ENCODE measurements at regions of chr6 and their contacts with region 1.

Region 1: DNA sequence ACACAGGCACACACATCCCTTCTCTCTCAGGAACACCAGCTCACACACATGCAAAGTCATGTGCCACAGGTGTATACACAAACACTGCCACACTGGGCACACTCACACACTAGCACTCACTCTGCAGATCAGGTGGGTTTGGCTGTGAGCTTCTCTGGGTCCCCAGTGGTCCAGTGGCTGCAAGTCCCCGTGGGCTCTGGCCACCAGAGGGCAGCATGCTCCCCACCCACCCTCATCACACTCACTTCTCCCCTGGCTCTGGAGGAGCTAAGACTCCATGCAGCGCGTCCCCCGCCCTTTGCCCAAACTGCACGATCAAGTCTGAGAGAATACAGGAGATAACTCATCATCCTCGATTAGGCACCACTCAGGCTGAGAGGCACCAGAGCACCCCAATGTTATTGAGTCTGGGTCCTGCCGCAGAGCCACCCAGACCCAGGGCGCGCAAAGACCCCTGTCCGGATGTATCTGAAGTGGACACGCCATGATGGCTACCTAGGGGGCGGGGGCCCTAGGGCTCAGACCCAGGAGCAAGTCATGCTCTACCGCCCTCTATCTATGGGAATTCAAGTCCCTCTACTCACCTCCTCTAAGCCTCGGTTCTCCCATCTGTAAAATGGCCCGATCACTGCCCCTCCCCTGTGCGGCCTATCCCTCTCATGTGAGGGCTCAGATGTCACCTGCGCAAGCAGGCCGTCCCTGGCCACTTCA is 90.5 kb downstream of the GRM4 start:
- DNase-seq: peak; percentile 37 to 65 (median 51)
- ATAC-seq: peak; percentile 79
- H3K4me3 ChIP-seq: no peak overlapping the region
- H3K4me3 Mint-ChIP-seq: no peak overlapping the region
- H3K27ac ChIP-seq: no peak overlapping the region
- H3K27ac Mint-ChIP-seq: peak overlapping the region in 1 of 9 donors; percentile 25
- H3K4me1 ChIP-seq: no peaks in the 10 kb centered on the region
- H3K4me1 Mint-ChIP-seq: peaks cover 0 to 11% (median 0%) of the 10 kb centered on the region in 7 donors
- H3K27me3 ChIP-seq: no peaks in the 10 kb centered on the region
- H3K27me3 Mint-ChIP-seq: peaks cover 0 to 15% (median 0%) of the 10 kb centered on the region in 5 donors

Region 2: DNA sequence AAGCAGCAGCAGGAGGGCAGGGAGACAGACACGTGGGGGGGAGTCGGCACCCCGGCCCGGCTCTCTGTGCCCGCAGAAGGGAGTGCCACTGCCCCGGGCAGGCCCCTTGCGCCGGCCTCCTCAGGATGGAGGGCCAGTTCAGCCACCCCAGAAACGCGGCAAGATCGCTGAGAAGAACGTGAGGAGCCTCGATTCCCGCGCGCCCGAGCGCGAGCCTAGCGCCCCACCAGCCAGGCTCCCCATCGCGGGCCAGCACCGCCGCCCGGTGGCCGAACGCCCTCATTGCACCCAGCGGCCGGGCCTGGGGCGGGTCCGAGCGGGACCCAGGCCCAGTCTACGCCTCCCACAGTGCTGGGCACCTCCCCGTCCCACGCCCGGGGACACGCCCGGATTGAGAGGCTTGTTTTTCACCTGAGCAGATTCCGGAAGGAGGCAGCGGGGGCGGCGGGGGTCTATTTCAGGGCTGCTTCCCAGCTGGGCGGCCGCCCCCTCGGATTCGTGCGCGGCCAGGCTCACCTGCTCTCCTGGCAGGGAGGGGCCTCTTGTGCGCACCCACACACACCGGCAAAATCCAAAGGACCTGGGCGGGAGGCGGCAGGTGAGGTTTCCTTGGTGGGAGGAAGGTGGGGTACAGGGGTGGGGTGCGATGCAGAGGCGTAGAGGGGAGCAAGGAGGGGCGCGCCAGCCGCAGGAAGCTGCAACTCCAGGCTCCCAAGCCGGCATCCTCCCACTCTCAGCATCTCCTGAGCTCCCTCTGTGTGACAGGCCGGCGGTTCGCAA is 99.5 kb after region 1 on chr6:
- CTCF ChIA-PET with region 1: interaction called, 27 read pairs
- POLR2A ChIA-PET with region 1: no interaction called
- intact Hi-C with region 1: loop called in 1 of 2 experiments (anchors 1 kb)
- DNase-seq: peak; percentile 28 to 80 (median 70)
- ATAC-seq: peak; percentile 91
- H3K4me3 ChIP-seq: peak overlapping the region; percentile 37
- H3K4me3 Mint-ChIP-seq: peak overlapping the region in 8 of 10 donors; percentile 29 to 74 (median 54)
- H3K27ac ChIP-seq: no peak overlapping the region
- H3K27ac Mint-ChIP-seq: no peak overlapping the region
- H3K4me1 ChIP-seq: peaks cover 3 to 9% of the 10 kb centered on the region in 2 donors
- H3K4me1 Mint-ChIP-seq: peaks cover 0 to 10% (median 5%) of the 10 kb centered on the region in 7 donors
- H3K27me3 ChIP-seq: peaks cover 2 to 6% of the 10 kb centered on the region in 2 donors
- H3K27me3 Mint-ChIP-seq: peaks cover 25 to 82% (median 34%) of the 10 kb centered on the region in 5 donors

Region 3: GRCh38 chr6:34771727-34772126 is 716.3 kb after region 1 on chr6:
- CTCF ChIA-PET with region 1: no interaction called
- POLR2A ChIA-PET with region 1: no interaction called
- intact Hi-C with region 1: no loop called
- DNase-seq: no peak
- ATAC-seq: no peak
- H3K4me3 ChIP-seq: no peak overlapping the region
- H3K4me3 Mint-ChIP-seq: no peak overlapping the region
- H3K27ac ChIP-seq: no peak overlapping the region
- H3K27ac Mint-ChIP-seq: peak overlapping the region in 2 of 9 donors; percentile 19 to 48
- H3K4me1 ChIP-seq: peaks cover 0 to 10% of the 10 kb centered on the region in 2 donors
- H3K4me1 Mint-ChIP-seq: peaks cover 9 to 27% (median 18%) of the 10 kb centered on the region in 7 donors
- H3K27me3 ChIP-seq: no peaks in the 10 kb centered on the region
- H3K27me3 Mint-ChIP-seq: no peaks in the 10 kb centered on the region